KBM-7 (cell line): ENCODE measurements at regions of chr2 and their contacts with region 1.

Region 1: GRCh38 chr2:72862239-72862988 is 24.8 kb upstream of the SPR start:
- DNase-seq: peak; percentile 93

Region 2: GRCh38 chr2:72770879-72771461 is 91.4 kb before region 1 on chr2:
- in situ Hi-C with region 1: loop called (anchors 25 kb)
- DNase-seq: peak; percentile 71